ENCODE measurements at regions of chr12 and their contacts with region 1.

Region 1: GRCh38 chr12:56258057-56258819 is at the start of gene ANKRD52:
- DNase-seq: peak; percentile 93
- ATAC-seq: peak; percentile 95
- H3K4me3 ChIP-seq: peak within 1 kb of the TSS; percentile 32 to 99 (median 77)
- H3K4me3 Mint-ChIP-seq: peak within 1 kb of the TSS; percentile 90
- H3K27ac ChIP-seq: peak within 1 kb of the TSS; percentile 60 to 81
- H3K27ac Mint-ChIP-seq: peak within 1 kb of the TSS; percentile 92
- H3K4me1 ChIP-seq: peaks cover 16 to 21% of the 10 kb centered on the region in 2 donors
- H3K4me1 Mint-ChIP-seq: peaks cover 18% of the 10 kb centered on the region
- H3K27me3 ChIP-seq: no peaks in the 10 kb centered on the region
- H3K27me3 Mint-ChIP-seq: no peaks in the 10 kb centered on the region
- CTCF ChIP-seq: peak; percentile 78
- total RNA-seq, gene ANKRD52: 46.5 and 54.6 TPM in 2 replicates

Region 2: DNA sequence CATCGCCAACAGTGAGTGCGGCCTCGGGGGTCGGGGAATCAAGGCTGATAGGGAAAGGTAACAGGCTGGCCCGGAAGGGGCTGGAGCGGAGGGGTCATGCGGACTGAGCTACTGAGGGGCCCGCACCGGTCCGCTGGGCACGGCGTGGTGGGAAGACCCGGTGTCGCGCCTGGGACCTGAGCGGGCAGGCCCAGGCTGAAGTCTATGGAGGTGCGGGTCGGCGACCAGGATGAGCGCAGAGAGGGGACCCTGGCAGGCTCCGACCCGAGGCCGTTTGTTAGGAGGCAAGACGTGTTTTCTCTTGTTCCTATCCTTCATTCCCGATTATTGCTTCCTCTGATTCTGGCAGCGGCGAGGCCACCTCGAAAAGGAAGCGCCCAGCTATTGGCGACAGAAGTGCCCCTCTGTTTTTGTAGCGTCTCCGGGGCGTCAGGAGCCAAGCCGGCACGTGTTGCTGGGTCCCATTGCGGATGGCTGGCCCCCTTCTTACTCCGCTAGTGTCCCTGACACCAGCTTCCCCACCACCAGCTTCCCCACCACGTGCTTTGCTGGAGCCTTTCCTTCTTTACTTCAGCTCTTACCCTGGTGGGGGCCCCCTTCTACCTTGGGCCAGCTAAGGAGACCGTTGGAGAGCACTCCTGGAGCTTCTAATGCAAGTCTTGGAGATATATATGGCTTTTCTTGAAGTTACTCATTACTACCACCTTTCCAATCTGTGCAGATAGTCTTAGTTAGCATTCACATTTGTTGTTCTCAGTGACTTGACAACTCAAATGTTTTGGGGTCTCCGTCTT is 153.2 kb before region 1 on chr12:
- CTCF ChIA-PET with region 1: no interaction called
- POLR2A ChIA-PET with region 1: no interaction called
- intact Hi-C with region 1: no loop called
- DNase-seq: no peak
- ATAC-seq: peak; percentile 1
- H3K4me3 ChIP-seq: peak overlapping the region; percentile 32 to 93 (median 86)
- H3K4me3 Mint-ChIP-seq: peak overlapping the region; percentile 100
- H3K27ac ChIP-seq: peak overlapping the region; percentile 66 to 67
- H3K27ac Mint-ChIP-seq: peak overlapping the region; percentile 92
- H3K4me1 ChIP-seq: peaks cover 18 to 23% of the 10 kb centered on the region in 2 donors
- H3K4me1 Mint-ChIP-seq: peaks cover 38% of the 10 kb centered on the region
- H3K27me3 ChIP-seq: no peaks in the 10 kb centered on the region
- H3K27me3 Mint-ChIP-seq: no peaks in the 10 kb centered on the region
- CTCF ChIP-seq: no peak

Region 3: GRCh38 chr12:56206457-56207166 is 51.6 kb before region 1 on chr12:
- CTCF ChIA-PET with region 1: interaction called, 40 read pairs
- POLR2A ChIA-PET with region 1: no interaction called
- intact Hi-C with region 1: loop called (anchors 5 kb)
- DNase-seq: peak; percentile 65
- ATAC-seq: no peak
- H3K4me3 ChIP-seq: no peak overlapping the region
- H3K4me3 Mint-ChIP-seq: no peak overlapping the region
- H3K27ac ChIP-seq: peak overlapping the region in 1 of 2 donors; percentile 65
- H3K27ac Mint-ChIP-seq: peak overlapping the region; percentile 89
- H3K4me1 ChIP-seq: peaks cover 9 to 18% of the 10 kb centered on the region in 2 donors
- H3K4me1 Mint-ChIP-seq: peaks cover 47% of the 10 kb centered on the region
- H3K27me3 ChIP-seq: no peaks in the 10 kb centered on the region
- H3K27me3 Mint-ChIP-seq: no peaks in the 10 kb centered on the region
- CTCF ChIP-seq: peak; percentile 63

Region 4: GRCh38 chr12:56425193-56425592 is 167.0 kb after region 1 on chr12:
- CTCF ChIA-PET with region 1: no interaction called
- POLR2A ChIA-PET with region 1: no interaction called
- intact Hi-C with region 1: no loop called
- DNase-seq: no peak
- ATAC-seq: no peak
- H3K4me3 ChIP-seq: no peak overlapping the region
- H3K4me3 Mint-ChIP-seq: no peak overlapping the region
- H3K27ac ChIP-seq: no peak overlapping the region
- H3K27ac Mint-ChIP-seq: no peak overlapping the region
- H3K4me1 ChIP-seq: no peaks in the 10 kb centered on the region
- H3K4me1 Mint-ChIP-seq: no peaks in the 10 kb centered on the region
- H3K27me3 ChIP-seq: no peaks in the 10 kb centered on the region
- H3K27me3 Mint-ChIP-seq: no peaks in the 10 kb centered on the region
- CTCF ChIP-seq: no peak